ENCODE measurements at regions of chr6 and their contacts with region 1.

Region 1: GRCh38 chr6:15473741-15474161 is 189.1 kb downstream of the DTNBP1 start:
- DNase-seq: peak; percentile 88
- ATAC-seq: no peak
- H3K4me3 ChIP-seq: no peak overlapping the region
- H3K27ac ChIP-seq: peak overlapping the region; percentile 12; the same call in 1 of the 2 replicates
- H3K4me1 ChIP-seq: peaks cover 31% of the 10 kb centered on the region
- H3K27me3 ChIP-seq: no peaks in the 10 kb centered on the region
- CTCF ChIP-seq: no peak
- POLR2A ChIP-seq: no peak
- RAD21 ChIP-seq: no peak

Region 2: DNA sequence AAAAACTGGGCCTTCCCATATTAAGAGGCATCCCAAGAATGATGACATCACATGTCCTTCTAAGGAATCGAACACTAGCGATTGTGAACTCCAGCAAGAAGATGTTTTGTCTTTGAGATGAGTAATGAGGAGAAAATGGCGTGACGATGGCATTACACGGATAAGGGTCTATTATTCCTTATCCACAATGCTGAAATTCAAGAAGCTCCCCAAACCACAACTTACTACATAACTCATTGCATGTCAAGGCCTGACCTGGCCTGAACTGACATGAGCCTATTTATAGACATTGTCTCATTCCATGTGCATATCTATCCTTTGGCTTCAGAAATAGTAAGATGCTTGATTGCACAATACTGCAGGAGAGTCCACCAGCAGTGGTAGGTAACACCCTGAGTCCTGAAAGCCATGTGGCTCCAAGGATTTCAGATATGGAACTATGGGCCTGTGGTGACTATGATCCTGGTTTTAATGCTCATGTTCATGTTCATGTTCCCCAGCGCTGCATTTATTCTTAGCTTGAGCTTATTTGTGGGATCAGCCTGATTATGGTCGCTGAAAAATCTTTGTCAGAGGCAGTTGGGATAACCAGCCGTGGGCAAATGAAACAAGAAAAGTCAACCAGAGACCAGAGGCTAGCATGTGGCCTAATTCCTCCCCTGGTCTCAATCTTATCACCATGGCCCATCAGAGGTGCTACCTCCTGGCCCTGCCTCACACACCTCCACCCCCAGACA is 411.1 kb before region 1 on chr6:
- CTCF ChIA-PET with region 1: no interaction called
- POLR2A ChIA-PET with region 1: no interaction called
- dilution Hi-C with region 1: no loop called
- in situ Hi-C with region 1: no loop called
- intact Hi-C with region 1: loop called (anchors 10 kb)
- DNase-seq: peak; percentile 99
- ATAC-seq: peak; percentile 4; the same call in 1 of the 2 replicates
- H3K4me3 ChIP-seq: no peak overlapping the region
- H3K27ac ChIP-seq: no peak overlapping the region
- H3K4me1 ChIP-seq: peaks cover 21% of the 10 kb centered on the region
- H3K27me3 ChIP-seq: no peaks in the 10 kb centered on the region
- CTCF ChIP-seq: no peak
- POLR2A ChIP-seq: no peak
- RAD21 ChIP-seq: no peak

Region 3: DNA sequence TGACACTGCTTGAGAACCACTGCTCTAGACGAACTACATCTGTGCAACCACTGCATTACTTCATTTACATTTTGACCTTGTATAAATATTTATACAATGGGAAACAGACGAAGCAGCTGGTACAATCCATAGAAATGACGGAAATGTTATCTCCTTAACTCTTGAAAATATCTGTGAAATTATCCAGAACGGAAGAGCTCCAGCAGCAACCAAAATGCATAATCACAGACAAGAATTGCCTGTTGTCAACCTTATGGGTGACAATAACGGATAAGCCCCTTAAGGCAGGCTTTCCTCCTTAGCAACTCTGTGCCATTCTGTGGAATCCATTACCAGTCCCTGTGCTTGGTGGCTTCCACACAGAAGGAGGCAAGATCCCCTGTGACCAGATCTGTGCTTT is 73.6 kb after region 1 on chr6:
- CTCF ChIA-PET with region 1: no interaction called
- POLR2A ChIA-PET with region 1: no interaction called
- dilution Hi-C with region 1: no loop called
- in situ Hi-C with region 1: no loop called
- intact Hi-C with region 1: no loop called
- DNase-seq: peak; percentile 85
- ATAC-seq: peak; percentile 92
- H3K4me3 ChIP-seq: no peak overlapping the region
- H3K27ac ChIP-seq: peak overlapping the region; percentile 79; the same call in 1 of the 2 replicates
- H3K4me1 ChIP-seq: peaks cover 6% of the 10 kb centered on the region
- H3K27me3 ChIP-seq: no peaks in the 10 kb centered on the region
- CTCF ChIP-seq: no peak
- POLR2A ChIP-seq: no peak
- RAD21 ChIP-seq: no peak